Activated naive CD4-positive, alpha-beta T cell treated with anti-CD3 and anti-CD28 coated beads for 36 hours (primary cell): ENCODE measurements at regions of chr16 and their contacts with region 1.

Region 1: GRCh38 chr16:24668481-24669061 is 60.9 kb upstream of the TNRC6A start:
- DNase-seq: peak; percentile 83
- H3K4me3 Mint-ChIP-seq: peak overlapping the region; percentile 37
- H3K27ac Mint-ChIP-seq: peak overlapping the region; percentile 94
- H3K4me1 Mint-ChIP-seq: peaks cover 56% of the 10 kb centered on the region
- H3K27me3 Mint-ChIP-seq: peaks cover 13% of the 10 kb centered on the region

Region 2: DNA sequence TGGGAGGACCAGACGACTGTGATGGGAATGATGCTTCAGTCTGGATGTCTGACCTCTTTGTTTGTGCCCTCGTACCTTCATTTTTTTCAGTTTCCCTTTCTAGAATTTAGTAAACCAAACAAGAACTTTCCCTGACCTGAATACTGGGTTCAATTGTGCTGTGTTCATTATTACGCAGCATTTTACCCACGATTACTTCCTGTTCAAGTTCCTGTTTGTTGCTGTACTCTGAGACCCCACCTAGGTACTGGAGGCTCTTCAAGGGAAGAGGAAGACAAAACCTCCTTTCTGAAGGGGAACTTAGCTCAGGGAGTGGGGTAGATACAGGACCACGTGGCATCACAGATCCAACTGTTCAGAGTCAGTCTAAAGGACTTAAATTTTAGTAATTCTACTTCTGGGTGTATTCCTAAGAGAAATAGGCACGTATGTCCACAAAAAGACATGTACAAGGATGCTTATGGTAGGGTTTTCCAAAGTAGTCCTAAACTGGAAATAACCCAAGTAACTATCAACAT is 842.0 kb before region 1 on chr16:
- CTCF ChIA-PET with region 1: no interaction called
- intact Hi-C with region 1: loop called (anchors 1 kb)
- DNase-seq: no peak
- H3K4me3 Mint-ChIP-seq: peak overlapping the region; percentile 17
- H3K27ac Mint-ChIP-seq: peak overlapping the region; percentile 70
- H3K4me1 Mint-ChIP-seq: peaks cover 21% of the 10 kb centered on the region
- H3K27me3 Mint-ChIP-seq: no peaks in the 10 kb centered on the region

Region 3: DNA sequence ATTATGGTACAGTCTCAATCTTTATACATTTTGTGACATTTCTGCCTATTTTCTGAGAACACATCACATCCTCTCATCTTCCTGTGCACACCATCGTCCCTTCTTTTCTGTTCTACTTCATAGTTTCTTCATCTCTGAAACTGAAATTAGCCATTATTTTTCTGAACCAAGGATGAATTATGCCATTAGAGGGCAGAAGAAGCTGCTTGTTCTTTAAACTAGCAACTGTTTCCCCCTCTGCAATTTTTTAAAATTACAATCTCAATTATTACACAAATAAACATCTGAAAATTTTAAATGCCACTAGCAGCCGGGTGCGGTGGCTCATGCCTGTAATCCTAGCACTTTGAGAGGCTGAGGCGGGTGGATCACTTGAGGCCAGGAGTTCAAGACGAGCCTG is 87.9 kb before region 1 on chr16:
- CTCF ChIA-PET with region 1: no interaction called
- intact Hi-C with region 1: loop called (anchors 2 kb)
- DNase-seq: no peak
- H3K4me3 Mint-ChIP-seq: no peak overlapping the region
- H3K27ac Mint-ChIP-seq: no peak overlapping the region
- H3K4me1 Mint-ChIP-seq: peaks cover 5% of the 10 kb centered on the region
- H3K27me3 Mint-ChIP-seq: peaks cover 6% of the 10 kb centered on the region

Region 4: DNA sequence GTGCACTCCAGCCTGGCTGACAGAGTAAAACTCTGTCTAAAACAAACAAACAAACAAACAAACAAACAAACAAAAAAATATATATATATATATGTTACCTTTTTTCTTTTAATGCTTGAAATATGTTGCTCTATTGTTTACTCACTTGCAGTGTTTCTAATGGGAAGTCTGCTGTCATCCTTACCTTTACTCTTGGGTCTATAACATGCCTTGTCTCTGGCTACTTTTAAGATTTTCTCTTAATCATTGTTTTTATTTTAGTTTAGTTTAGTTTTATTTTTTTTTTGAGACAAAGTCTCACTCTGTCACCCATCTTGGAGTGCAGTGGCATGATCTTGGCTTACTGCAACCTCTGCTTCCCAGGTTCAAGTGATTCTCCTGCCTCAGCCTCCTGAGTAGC is 44.8 kb after region 1 on chr16:
- CTCF ChIA-PET with region 1: no interaction called
- intact Hi-C with region 1: no loop called
- DNase-seq: no peak
- H3K4me3 Mint-ChIP-seq: no peak overlapping the region
- H3K27ac Mint-ChIP-seq: no peak overlapping the region
- H3K4me1 Mint-ChIP-seq: no peaks in the 10 kb centered on the region
- H3K27me3 Mint-ChIP-seq: peaks cover 3% of the 10 kb centered on the region

Region 5: DNA sequence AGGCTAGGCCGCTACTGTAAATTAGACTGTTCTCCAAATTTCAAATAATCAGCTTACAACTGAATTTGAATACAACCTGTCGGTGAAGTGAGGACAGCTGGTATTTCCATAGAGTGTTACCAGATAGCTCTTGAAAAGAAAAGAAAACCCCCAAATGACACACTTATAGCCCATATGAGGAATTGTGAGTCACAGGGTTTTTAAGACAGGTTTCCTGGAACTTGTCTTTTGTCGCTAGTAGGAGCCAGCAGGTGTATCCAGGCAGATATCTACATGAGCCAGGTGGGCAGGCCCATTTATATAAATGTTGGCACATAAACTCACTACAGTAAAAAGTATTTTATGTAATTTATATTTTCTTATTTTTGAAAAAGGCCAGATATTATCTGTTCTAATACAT is 84.9 kb after region 1 on chr16:
- CTCF ChIA-PET with region 1: no interaction called
- intact Hi-C with region 1: loop called (anchors 1 kb)
- DNase-seq: peak; percentile 65
- H3K4me3 Mint-ChIP-seq: peak overlapping the region; percentile 1
- H3K27ac Mint-ChIP-seq: peak overlapping the region; percentile 87
- H3K4me1 Mint-ChIP-seq: peaks cover 66% of the 10 kb centered on the region
- H3K27me3 Mint-ChIP-seq: no peaks in the 10 kb centered on the region

Region 6: GRCh38 chr16:25051406-25052150 is 383.0 kb after region 1 on chr16:
- CTCF ChIA-PET with region 1: no interaction called
- intact Hi-C with region 1: loop called (anchors 5 kb)
- DNase-seq: peak; percentile 39
- H3K4me3 Mint-ChIP-seq: peak overlapping the region; percentile 53
- H3K27ac Mint-ChIP-seq: peak overlapping the region; percentile 74
- H3K4me1 Mint-ChIP-seq: peaks cover 66% of the 10 kb centered on the region
- H3K27me3 Mint-ChIP-seq: no peaks in the 10 kb centered on the region